Activated B cell treated with CpG ODN at 0.5 μM for 24 hours (primary cell): ENCODE measurements at regions of chr5 and their contacts with region 1.

Region 1: GRCh38 chr5:171907725-171908343 is 98.6 kb downstream of the FBXW11 start:
- DNase-seq: no peak
- ATAC-seq: peak; percentile 73
- H3K4me3 Mint-ChIP-seq: no peak overlapping the region
- H3K27ac Mint-ChIP-seq: peak overlapping the region; percentile 15
- H3K4me1 Mint-ChIP-seq: peaks cover 49% of the 10 kb centered on the region
- H3K27me3 Mint-ChIP-seq: no peaks in the 10 kb centered on the region
- CTCF ChIP-seq: no peak

Region 2: GRCh38 chr5:171272996-171273970 is 634.6 kb before region 1 on chr5:
- CTCF ChIA-PET with region 1: no interaction called
- POLR2A ChIA-PET with region 1: no interaction called
- intact Hi-C with region 1: loop called (anchors 2 kb)
- DNase-seq: no peak
- ATAC-seq: no peak
- H3K4me3 Mint-ChIP-seq: no peak overlapping the region
- H3K27ac Mint-ChIP-seq: no peak overlapping the region
- H3K4me1 Mint-ChIP-seq: no peaks in the 10 kb centered on the region
- H3K27me3 Mint-ChIP-seq: peaks cover 14% of the 10 kb centered on the region
- CTCF ChIP-seq: no peak

Region 3: DNA sequence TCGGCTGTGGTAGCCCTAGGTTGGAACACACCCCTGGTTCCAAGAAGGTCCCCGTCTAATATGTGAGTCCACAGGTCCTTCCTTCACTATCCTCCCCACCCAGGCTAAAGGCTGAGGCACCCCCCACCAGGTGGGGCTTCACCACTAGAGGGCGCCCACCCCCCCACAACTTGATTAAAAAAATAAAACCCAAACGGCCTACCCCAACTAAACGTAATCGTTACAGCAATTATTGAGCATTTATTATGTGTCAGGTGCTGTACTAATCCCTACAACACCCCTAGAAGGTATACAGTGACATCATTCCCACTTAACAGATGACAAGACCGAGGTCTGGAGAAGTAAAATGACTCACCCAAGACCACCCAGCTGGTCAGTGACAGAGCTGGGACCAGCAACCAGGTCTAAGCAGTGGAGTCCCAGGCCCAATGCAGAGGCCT is 423.4 kb before region 1 on chr5:
- CTCF ChIA-PET with region 1: interaction called, 5 read pairs
- POLR2A ChIA-PET with region 1: no interaction called
- intact Hi-C with region 1: loop called (anchors 1 kb)
- DNase-seq: peak; percentile 31
- ATAC-seq: no peak
- H3K4me3 Mint-ChIP-seq: no peak overlapping the region
- H3K27ac Mint-ChIP-seq: no peak overlapping the region
- H3K4me1 Mint-ChIP-seq: peaks cover 3% of the 10 kb centered on the region
- H3K27me3 Mint-ChIP-seq: peaks cover 26% of the 10 kb centered on the region
- CTCF ChIP-seq: peak; percentile 40

Region 4: DNA sequence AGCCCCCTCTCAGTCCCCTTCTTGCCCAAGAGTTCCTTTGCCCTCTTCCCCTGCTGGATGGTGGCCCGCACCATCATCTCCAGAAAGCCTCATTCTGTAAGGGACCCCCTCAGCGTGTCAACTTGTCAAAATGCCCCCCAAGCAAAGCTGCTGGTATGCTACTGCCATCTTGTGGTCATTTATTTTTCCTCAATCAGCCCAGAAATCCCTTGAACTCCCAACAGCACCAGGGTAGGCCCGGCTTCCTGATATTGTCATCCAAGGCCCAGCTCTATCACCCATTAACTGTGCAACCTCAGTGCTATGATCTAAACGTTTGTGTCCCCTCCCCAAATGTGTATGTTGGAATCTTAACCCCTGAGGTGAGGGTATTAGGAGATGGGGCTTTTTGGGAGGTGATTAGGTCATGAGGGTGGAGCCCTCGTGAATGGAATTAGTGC is 151.8 kb after region 1 on chr5:
- CTCF ChIA-PET with region 1: interaction called, 46 read pairs
- POLR2A ChIA-PET with region 1: interaction called, 4 read pairs
- intact Hi-C with region 1: loop called (anchors 1 kb)
- DNase-seq: no peak
- ATAC-seq: no peak
- H3K4me3 Mint-ChIP-seq: no peak overlapping the region
- H3K27ac Mint-ChIP-seq: no peak overlapping the region
- H3K4me1 Mint-ChIP-seq: no peaks in the 10 kb centered on the region
- H3K27me3 Mint-ChIP-seq: no peaks in the 10 kb centered on the region
- CTCF ChIP-seq: no peak